Activated T-helper 2 cell treated with anti-CD3 and anti-CD28 coated beads, Interferon-gamma antibody, Interleukin-2, Interleukin-4, amounts not matched to agents 10 μg/mL and 5 μg/mL and 100 μg/mL, durations not matched to agents 14 hours and 24 hours and 36 hours (primary cell): ENCODE measurements at regions of chr11 and their contacts with region 1.

Region 1: GRCh38 chr11:119634301-119634700 is 94.7 kb downstream of the NECTIN1 start:
- DNase-seq: no peak
- H3K4me3 Mint-ChIP-seq: no peak overlapping the region
- H3K27ac Mint-ChIP-seq: no peak overlapping the region
- H3K4me1 Mint-ChIP-seq: no peaks in the 10 kb centered on the region
- H3K27me3 Mint-ChIP-seq: no peaks in the 10 kb centered on the region

Region 2: GRCh38 chr11:120108154-120108865 is 474.0 kb after region 1 on chr11:
- intact Hi-C with region 1: loop called (anchors 10 kb)
- DNase-seq: peak; percentile 28
- H3K4me3 Mint-ChIP-seq: no peak overlapping the region
- H3K27ac Mint-ChIP-seq: no peak overlapping the region
- H3K4me1 Mint-ChIP-seq: no peaks in the 10 kb centered on the region
- H3K27me3 Mint-ChIP-seq: peaks cover 2% of the 10 kb centered on the region